GM12878 (cell line): ENCODE measurements at regions of chr12 and their contacts with region 1.

Region 1: GRCh38 chr12:110431957-110432587 is 18.1 kb downstream of the ARPC3 start:
- DNase-seq: no peak
- ATAC-seq: peak; percentile 38; the same call in 1 of the 3 replicates
- H3K4me3 ChIP-seq: no peak overlapping the region
- H3K27ac ChIP-seq: no peak overlapping the region
- H3K4me1 ChIP-seq: peaks cover 5% of the 10 kb centered on the region
- H3K27me3 ChIP-seq: no peaks in the 10 kb centered on the region
- CTCF ChIP-seq: no peak
- EP300 ChIP-seq: no peak
- POLR2A ChIP-seq: no peak
- RAD21 ChIP-seq: no peak

Region 2: GRCh38 chr12:110124184-110124995 is 307.7 kb before region 1 on chr12 and contains the start of gene IFT81:
- CTCF ChIA-PET with region 1: interaction called, 6 read pairs
- POLR2A ChIA-PET with region 1: no interaction called
- RAD21 ChIA-PET with region 1: interaction called, 10 read pairs
- SMC1A ChIA-PET with region 1: interaction called, 3 read pairs
- in situ Hi-C with region 1: no loop called
- intact Hi-C with region 1: no loop called
- DNase-seq: no peak
- ATAC-seq: peak; percentile 93
- H3K4me3 ChIP-seq: peak within 1 kb of the TSS; percentile 90
- H3K27ac ChIP-seq: peak within 1 kb of the TSS; percentile 84
- H3K4me1 ChIP-seq: 0 out of 2 replicates have a peak, but pooled peaks cover 2% of the 10 kb centered on the region
- H3K27me3 ChIP-seq: no peaks in the 10 kb centered on the region
- CTCF ChIP-seq: 0 out of 6 replicates have a peak, but pooled peaks of 1 of the 3 experiments have one; percentile 3
- EP300 ChIP-seq: no peak
- POLR2A ChIP-seq: peak; percentile 51; the same call in 1 of the 2 replicates
- RAD21 ChIP-seq: 0 out of 2 replicates have a peak, but pooled peaks have one; percentile 2
- polyA plus RNA-seq, gene IFT81: 5.3 to 5.8 TPM

Region 3: DNA sequence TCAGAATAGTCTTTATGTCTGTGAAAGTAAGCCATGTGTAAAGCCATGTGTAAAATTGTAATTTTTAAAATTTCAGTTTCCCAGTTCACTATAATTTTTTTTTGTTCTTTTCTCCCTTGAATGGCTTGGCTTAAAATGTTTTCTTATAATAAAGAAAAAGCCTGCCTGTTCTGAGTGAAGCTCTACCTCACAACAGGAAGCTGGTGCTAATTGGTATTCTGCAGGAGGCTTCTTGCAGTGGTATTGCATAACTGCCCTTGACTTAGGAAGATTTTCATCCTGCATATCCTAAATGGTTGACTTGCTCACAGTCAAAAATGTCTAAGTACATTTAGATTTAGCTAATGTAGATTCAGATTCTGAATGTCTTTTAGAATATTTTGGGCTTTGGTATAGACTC is 101.5 kb before region 1 on chr12:
- CTCF ChIA-PET with region 1: interaction called, 14 read pairs
- POLR2A ChIA-PET with region 1: interaction called, 3 read pairs
- RAD21 ChIA-PET with region 1: interaction called, 3 read pairs
- SMC1A ChIA-PET with region 1: interaction called, 6 read pairs
- in situ Hi-C with region 1: no loop called
- intact Hi-C with region 1: no loop called
- DNase-seq: no peak
- ATAC-seq: no peak
- H3K4me3 ChIP-seq: no peak overlapping the region
- H3K27ac ChIP-seq: no peak overlapping the region
- H3K4me1 ChIP-seq: no peaks in the 10 kb centered on the region
- H3K27me3 ChIP-seq: no peaks in the 10 kb centered on the region
- CTCF ChIP-seq: no peak
- EP300 ChIP-seq: no peak
- POLR2A ChIP-seq: no peak
- RAD21 ChIP-seq: no peak

Region 4: DNA sequence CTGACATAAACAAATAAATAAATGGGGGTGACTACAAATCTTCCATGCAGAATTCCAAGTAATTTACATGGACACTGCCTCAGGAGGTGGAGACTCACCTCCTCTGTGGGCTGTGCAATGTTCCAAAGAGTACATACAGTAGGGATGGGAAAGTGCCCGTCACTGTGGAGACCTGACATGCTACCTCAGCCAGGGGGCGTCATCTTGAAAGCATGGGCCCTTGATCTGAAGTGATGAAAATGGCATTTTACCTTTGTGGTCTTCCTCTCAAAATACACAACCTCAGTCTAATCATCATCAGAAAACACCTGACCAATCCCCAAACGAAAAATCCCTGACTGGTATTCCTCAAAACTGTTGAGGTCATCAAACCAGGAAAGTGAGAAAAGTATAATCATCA is 77.0 kb before region 1 on chr12:
- CTCF ChIA-PET with region 1: interaction called, 55 read pairs
- POLR2A ChIA-PET with region 1: interaction called, 11 read pairs
- RAD21 ChIA-PET with region 1: interaction called, 34 read pairs
- SMC1A ChIA-PET with region 1: interaction called, 28 read pairs
- in situ Hi-C with region 1: no loop called
- intact Hi-C with region 1: loop called (anchors 1 kb)
- DNase-seq: no peak
- ATAC-seq: peak; percentile 85
- H3K4me3 ChIP-seq: no peak overlapping the region
- H3K27ac ChIP-seq: no peak overlapping the region
- H3K4me1 ChIP-seq: no peaks in the 10 kb centered on the region; the same call in 1 of the 2 replicates
- H3K27me3 ChIP-seq: no peaks in the 10 kb centered on the region
- CTCF ChIP-seq: peak; percentile 63 to 71 (median 66); a peak in 5 of 6 replicates
- EP300 ChIP-seq: no peak
- POLR2A ChIP-seq: no peak
- RAD21 ChIP-seq: peak; percentile 57

Region 5: DNA sequence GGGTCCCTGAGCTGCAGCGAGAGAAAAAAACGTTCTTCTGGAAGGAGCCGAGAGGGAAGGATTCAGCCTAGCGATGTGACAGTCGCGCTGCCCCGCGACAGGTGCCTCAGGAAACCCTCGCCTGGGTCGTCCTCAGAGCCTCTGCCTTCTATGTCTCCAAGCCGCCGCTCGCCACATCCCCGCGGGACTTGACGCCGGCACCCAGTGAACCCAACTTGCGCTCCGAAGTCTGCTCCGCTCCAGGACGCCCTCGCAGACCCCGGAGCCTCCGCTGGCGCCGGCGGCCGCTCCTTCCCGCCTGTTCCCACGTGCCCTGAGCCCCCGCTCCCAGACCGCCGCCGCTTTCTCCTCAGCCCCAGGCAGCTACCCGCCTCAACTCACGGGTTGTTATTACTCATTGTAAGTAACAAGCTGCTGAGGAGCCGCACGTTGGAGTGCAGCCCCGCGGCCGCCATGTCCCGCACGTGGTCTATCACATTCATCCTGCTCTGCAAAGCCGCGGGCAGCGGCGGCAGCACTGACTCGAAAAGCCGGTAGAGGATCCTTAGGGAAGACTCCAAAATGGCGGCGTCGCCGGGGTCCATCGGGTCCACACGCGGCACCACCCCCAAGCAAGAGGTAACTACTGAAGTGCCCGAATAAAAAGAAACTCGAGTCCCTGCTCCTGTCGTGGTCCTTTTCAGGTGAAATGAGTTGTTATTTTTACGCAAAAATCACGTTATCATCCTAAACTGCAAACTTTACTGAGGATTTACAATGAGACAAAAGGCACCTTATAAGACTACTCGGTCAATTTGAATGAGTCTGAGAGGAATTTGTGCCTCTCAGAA is 28.7 kb before region 1 on chr12 and contains the start of gene ANAPC7:
- CTCF ChIA-PET with region 1: interaction called, 12 read pairs
- POLR2A ChIA-PET with region 1: no interaction called
- RAD21 ChIA-PET with region 1: interaction called, 3 read pairs
- SMC1A ChIA-PET with region 1: interaction called, 5 read pairs
- in situ Hi-C with region 1: no loop called
- intact Hi-C with region 1: no loop called
- DNase-seq: peak; percentile 61
- ATAC-seq: peak; percentile 92
- H3K4me3 ChIP-seq: peak within 1 kb of the TSS; percentile 83
- H3K27ac ChIP-seq: peak within 1 kb of the TSS; percentile 99
- H3K4me1 ChIP-seq: peaks cover 3% of the 10 kb centered on the region; the same call in 1 of the 2 replicates
- H3K27me3 ChIP-seq: no peaks in the 10 kb centered on the region
- CTCF ChIP-seq: no peak
- EP300 ChIP-seq: no peak
- POLR2A ChIP-seq: peak; percentile 84
- RAD21 ChIP-seq: no peak
- polyA plus RNA-seq, gene ANAPC7: 24.5 to 30.1 TPM

Region 6: DNA sequence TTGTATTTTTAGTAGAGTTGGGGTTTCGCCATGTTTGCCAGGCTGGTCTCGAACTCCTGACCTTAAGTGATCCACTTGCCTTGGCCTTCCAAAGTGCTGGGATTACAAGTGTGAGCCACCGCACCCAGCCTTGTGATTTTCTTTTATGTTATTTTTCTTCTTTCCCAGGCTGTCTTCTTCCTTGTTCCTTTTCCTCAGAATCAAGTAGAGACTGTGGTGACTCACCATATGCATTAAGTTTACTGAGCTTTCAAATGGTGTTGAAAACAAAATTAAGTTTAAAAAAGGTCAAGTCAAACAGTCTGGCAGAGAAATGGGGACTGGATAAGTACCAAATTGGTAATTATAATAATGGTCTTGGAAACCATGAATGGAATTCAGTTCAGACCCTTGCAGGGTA is 12.4 kb after region 1 on chr12:
- CTCF ChIA-PET with region 1: interaction called, 32 read pairs
- POLR2A ChIA-PET with region 1: interaction called, 4 read pairs
- RAD21 ChIA-PET with region 1: interaction called, 19 read pairs
- SMC1A ChIA-PET with region 1: interaction called, 6 read pairs
- in situ Hi-C with region 1: no loop called
- intact Hi-C with region 1: no loop called
- DNase-seq: no peak
- ATAC-seq: no peak
- H3K4me3 ChIP-seq: no peak overlapping the region
- H3K27ac ChIP-seq: no peak overlapping the region
- H3K4me1 ChIP-seq: peaks cover 4% of the 10 kb centered on the region
- H3K27me3 ChIP-seq: no peaks in the 10 kb centered on the region
- CTCF ChIP-seq: no peak
- EP300 ChIP-seq: no peak
- POLR2A ChIP-seq: no peak
- RAD21 ChIP-seq: no peak

Region 7: GRCh38 chr12:110619534-110619953 is 187.5 kb after region 1 on chr12:
- CTCF ChIA-PET with region 1: no interaction called
- POLR2A ChIA-PET with region 1: no interaction called
- RAD21 ChIA-PET with region 1: no interaction called
- SMC1A ChIA-PET with region 1: no interaction called
- in situ Hi-C with region 1: no loop called
- intact Hi-C with region 1: no loop called
- DNase-seq: peak; percentile 80
- ATAC-seq: peak; percentile 91
- H3K4me3 ChIP-seq: peak overlapping the region; percentile 75
- H3K27ac ChIP-seq: peak overlapping the region; percentile 61
- H3K4me1 ChIP-seq: peaks cover 25% of the 10 kb centered on the region
- H3K27me3 ChIP-seq: no peaks in the 10 kb centered on the region
- CTCF ChIP-seq: peak; percentile 40 to 81 (median 46); a peak in 5 of 6 replicates
- EP300 ChIP-seq: peak; percentile 60 to 94
- POLR2A ChIP-seq: no peak
- RAD21 ChIP-seq: peak; percentile 76

Region 8: GRCh38 chr12:110966081-110966760 is 534.1 kb after region 1 on chr12:
- CTCF ChIA-PET with region 1: no interaction called
- POLR2A ChIA-PET with region 1: no interaction called
- RAD21 ChIA-PET with region 1: no interaction called
- SMC1A ChIA-PET with region 1: no interaction called
- in situ Hi-C with region 1: no loop called
- intact Hi-C with region 1: no loop called
- DNase-seq: no peak
- ATAC-seq: no peak
- H3K4me3 ChIP-seq: no peak overlapping the region
- H3K27ac ChIP-seq: no peak overlapping the region
- H3K4me1 ChIP-seq: no peaks in the 10 kb centered on the region
- H3K27me3 ChIP-seq: no peaks in the 10 kb centered on the region; a peak in 2 of 4 replicates
- CTCF ChIP-seq: no peak
- EP300 ChIP-seq: no peak
- POLR2A ChIP-seq: no peak
- RAD21 ChIP-seq: no peak